Psoas muscle (tissue), 8 donors: ENCODE measurements at regions of chr19 and their contacts with region 1.

Region 1: GRCh38 chr19:17346109-17346671 is 8.8 kb downstream of the GTPBP3 start:
- DNase-seq: peak; percentile 77 to 85
- ATAC-seq: peak; percentile 78 to 94 (median 86)
- H3K4me3 ChIP-seq: no peak overlapping the region
- H3K27ac ChIP-seq: peak overlapping the region; percentile 65
- H3K4me1 ChIP-seq: peaks cover 26% of the 10 kb centered on the region
- H3K27me3 ChIP-seq: no peaks in the 10 kb centered on the region
- CTCF ChIP-seq: peak; percentile 98

Region 2: GRCh38 chr19:17385878-17386611 is 39.9 kb after region 1 on chr19:
- intact Hi-C with region 1: loop called (anchors 1 kb)
- DNase-seq: peak; percentile 66 to 82
- ATAC-seq: peak; percentile 67 to 80 (median 72)
- H3K4me3 ChIP-seq: no peak overlapping the region
- H3K27ac ChIP-seq: no peak overlapping the region
- H3K4me1 ChIP-seq: peaks cover 5% of the 10 kb centered on the region
- H3K27me3 ChIP-seq: peaks cover 0 to 3% (median 3%) of the 10 kb centered on the region in 3 donors
- CTCF ChIP-seq: peak; percentile 89